Left ventricle myocardium inferior (tissue), 1 donor: ENCODE measurements at regions of chr4 and their contacts with region 1.

Region 1: DNA sequence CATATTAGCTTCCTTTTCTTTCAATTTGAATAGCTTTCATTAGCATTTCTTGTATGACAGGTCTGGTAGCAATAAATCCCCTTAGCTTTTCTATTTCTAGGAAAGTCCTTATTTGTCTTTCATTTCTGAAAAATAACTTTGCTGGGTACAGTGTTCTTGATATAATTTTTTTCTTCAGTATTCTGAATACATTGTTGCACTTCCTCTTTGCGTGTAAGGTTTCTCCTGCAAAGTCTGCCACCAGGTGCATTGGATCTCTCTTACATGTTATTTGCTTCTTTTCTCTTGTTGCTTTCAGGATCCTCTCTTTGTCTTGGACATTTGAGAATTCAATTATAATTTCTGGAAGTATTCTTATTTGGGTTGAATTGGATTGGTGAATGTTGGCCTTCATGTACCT is 663.7 kb downstream of the GRXCR1 start:
- DNase-seq: no peak
- H3K4me3 ChIP-seq: no peak overlapping the region
- H3K27ac ChIP-seq: no peak overlapping the region
- H3K4me1 ChIP-seq: no peaks in the 10 kb centered on the region
- H3K27me3 ChIP-seq: no peaks in the 10 kb centered on the region
- CTCF ChIP-seq: no peak

Region 2: DNA sequence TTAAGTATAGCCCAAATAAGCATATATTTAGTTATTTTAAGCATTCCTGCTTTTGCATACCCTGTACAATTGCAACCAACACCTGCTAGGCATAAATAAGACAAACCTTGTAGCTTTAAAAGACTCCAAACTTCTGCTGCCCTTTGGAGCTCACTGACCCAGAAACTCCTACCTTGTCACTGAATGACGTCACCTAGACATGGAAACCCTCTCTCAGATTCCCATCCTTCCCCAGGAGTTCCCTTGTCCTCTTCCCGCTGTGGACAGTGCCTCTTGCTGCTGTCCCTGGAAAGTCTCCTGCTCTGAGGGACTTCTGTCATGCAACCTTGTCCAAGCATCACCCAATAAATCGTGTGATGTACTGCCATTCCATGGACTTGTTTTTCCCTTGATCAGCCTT is 156.5 kb before region 1 on chr4:
- intact Hi-C with region 1: loop called (anchors 5 kb)
- DNase-seq: no peak
- H3K4me3 ChIP-seq: no peak overlapping the region
- H3K27ac ChIP-seq: no peak overlapping the region
- H3K4me1 ChIP-seq: no peaks in the 10 kb centered on the region
- H3K27me3 ChIP-seq: no peaks in the 10 kb centered on the region
- CTCF ChIP-seq: no peak

Region 3: DNA sequence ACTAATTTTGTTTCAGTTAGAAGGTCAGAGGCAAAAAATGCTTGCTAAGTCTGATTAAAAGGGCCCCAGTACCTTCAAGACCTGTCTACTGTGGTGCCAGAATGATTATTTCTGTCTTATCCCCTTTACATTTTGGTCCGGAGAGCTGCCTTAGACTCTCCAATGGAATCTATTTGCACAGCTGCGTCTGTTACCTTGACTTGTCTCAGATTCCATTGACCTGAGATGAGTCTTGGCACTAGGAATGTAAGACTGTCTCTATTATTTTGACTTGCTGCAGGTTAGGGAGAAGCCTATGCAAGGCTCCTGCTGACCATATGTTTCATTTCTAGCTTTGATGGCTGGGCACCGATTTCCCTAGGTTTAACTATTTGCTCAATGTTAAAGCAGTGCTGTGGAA is 434.7 kb after region 1 on chr4:
- intact Hi-C with region 1: no loop called
- DNase-seq: no peak
- H3K4me3 ChIP-seq: no peak overlapping the region
- H3K27ac ChIP-seq: no peak overlapping the region
- H3K4me1 ChIP-seq: no peaks in the 10 kb centered on the region
- H3K27me3 ChIP-seq: no peaks in the 10 kb centered on the region
- CTCF ChIP-seq: no peak